CD8-positive, alpha-beta T cell (primary cell): ENCODE measurements at regions of chr16 and their contacts with region 1.

Region 1: GRCh38 chr16:57734925-57735754 is 430 bp upstream of the KATNB1 start:
- DNase-seq: peak; percentile 93 to 100 (median 98)
- ATAC-seq: peak; percentile 88
- H3K4me3 ChIP-seq: peak overlapping the region; percentile 84 to 99
- H3K4me3 Mint-ChIP-seq: peak overlapping the region; percentile 94
- H3K27ac ChIP-seq: peak overlapping the region; percentile 72 to 84
- H3K27ac Mint-ChIP-seq: peak overlapping the region; percentile 97
- H3K4me1 ChIP-seq: peaks cover 21% of the 10 kb centered on the region
- H3K4me1 Mint-ChIP-seq: peaks cover 30% of the 10 kb centered on the region
- H3K27me3 ChIP-seq: no peaks in the 10 kb centered on the region
- H3K27me3 Mint-ChIP-seq: no peaks in the 10 kb centered on the region
- CTCF ChIP-seq: no peak

Region 2: DNA sequence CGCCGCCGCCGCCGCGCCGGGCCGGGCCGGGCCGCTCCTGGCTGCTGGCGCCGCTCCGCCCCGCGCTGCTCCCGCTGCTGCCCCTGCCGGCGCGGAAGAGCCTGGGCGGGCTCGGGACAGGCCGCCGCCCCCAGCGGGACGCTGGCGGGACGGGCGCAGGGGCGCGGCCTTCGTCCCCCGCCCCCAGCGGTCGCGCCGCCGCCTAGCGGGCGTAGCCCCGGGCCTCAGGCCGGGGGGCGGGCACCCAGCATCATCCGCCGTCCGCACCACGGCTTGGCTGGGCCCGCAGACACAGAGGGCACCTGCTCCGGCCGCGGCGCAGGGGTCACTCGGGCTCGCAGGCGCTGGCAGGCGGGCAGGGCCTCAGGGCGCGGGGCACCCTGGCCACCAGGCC is 1309.7 kb before region 1 on chr16 and contains the start of gene AMFR:
- CTCF ChIA-PET with region 1: no interaction called
- POLR2A ChIA-PET with region 1: no interaction called
- intact Hi-C with region 1: loop called in 1 of 2 experiments (anchors 10 kb)
- DNase-seq: peak; percentile 35 to 93 (median 63)
- ATAC-seq: peak; percentile 93
- H3K4me3 ChIP-seq: peak within 1 kb of the TSS; percentile 46 to 62
- H3K4me3 Mint-ChIP-seq: peak within 1 kb of the TSS; percentile 89
- H3K27ac ChIP-seq: peak within 1 kb of the TSS; percentile 17 to 59
- H3K27ac Mint-ChIP-seq: peak within 1 kb of the TSS; percentile 85
- H3K4me1 ChIP-seq: peaks cover 19% of the 10 kb centered on the region
- H3K4me1 Mint-ChIP-seq: peaks cover 39% of the 10 kb centered on the region
- H3K27me3 ChIP-seq: no peaks in the 10 kb centered on the region
- H3K27me3 Mint-ChIP-seq: no peaks in the 10 kb centered on the region
- CTCF ChIP-seq: peak; percentile 45
- total RNA-seq, gene AMFR: 75.4 to 76.4 TPM

Region 3: DNA sequence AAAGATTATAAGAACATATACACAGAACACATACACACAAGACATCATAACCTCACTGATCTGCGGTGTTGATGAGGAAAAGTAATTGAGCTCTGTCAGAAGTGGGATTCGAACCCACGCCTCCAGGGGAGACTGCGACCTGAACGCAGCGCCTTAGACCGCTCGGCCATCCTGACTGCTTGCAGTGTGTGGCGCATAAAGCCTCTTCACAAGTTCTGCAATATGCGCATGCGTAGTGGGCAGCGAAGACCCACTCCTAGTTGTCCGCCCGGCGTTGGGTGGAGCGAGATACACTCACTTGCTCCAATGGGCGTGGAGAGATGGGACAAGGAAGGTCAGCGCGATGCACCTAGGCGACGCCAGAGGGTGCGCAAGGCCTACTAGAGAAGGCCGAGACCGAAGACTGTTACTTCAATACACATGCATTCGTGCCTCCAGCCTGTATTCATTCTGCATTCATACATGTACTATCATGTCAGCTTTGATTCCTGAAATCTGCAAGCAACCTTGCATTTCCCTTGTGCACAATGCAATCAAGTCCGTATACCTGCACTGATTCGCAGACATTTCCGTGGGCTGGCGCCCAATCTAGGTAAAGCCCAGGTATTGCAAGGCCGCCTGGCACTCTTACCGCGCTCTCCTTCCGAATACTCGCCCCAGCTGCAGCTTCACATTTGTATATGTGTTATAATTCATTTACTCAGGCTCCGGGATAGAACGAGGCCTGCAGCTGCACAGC is 434.6 kb before region 1 on chr16:
- CTCF ChIA-PET with region 1: no interaction called
- POLR2A ChIA-PET with region 1: no interaction called
- intact Hi-C with region 1: loop called (anchors 1 to 10 kb)
- DNase-seq: peak; percentile 98 to 100 (median 99)
- ATAC-seq: peak; percentile 91
- H3K4me3 ChIP-seq: peak overlapping the region; percentile 57 to 65
- H3K4me3 Mint-ChIP-seq: no peak overlapping the region
- H3K27ac ChIP-seq: peak overlapping the region; percentile 60 to 81
- H3K27ac Mint-ChIP-seq: no peak overlapping the region
- H3K4me1 ChIP-seq: peaks cover 17% of the 10 kb centered on the region
- H3K4me1 Mint-ChIP-seq: peaks cover 25% of the 10 kb centered on the region
- H3K27me3 ChIP-seq: no peaks in the 10 kb centered on the region
- H3K27me3 Mint-ChIP-seq: no peaks in the 10 kb centered on the region
- CTCF ChIP-seq: peak; percentile 82

Region 4: GRCh38 chr16:57591086-57591869 is 143.9 kb before region 1 on chr16:
- CTCF ChIA-PET with region 1: no interaction called
- POLR2A ChIA-PET with region 1: no interaction called
- intact Hi-C with region 1: loop called (anchors 2 to 5 kb)
- DNase-seq: peak in 7 of 9 experiments; percentile 37 to 82 (median 61)
- ATAC-seq: peak; percentile 27
- H3K4me3 ChIP-seq: no peak overlapping the region
- H3K4me3 Mint-ChIP-seq: peak overlapping the region; percentile 66
- H3K27ac ChIP-seq: peak overlapping the region in 1 of 2 experiments; percentile 62
- H3K27ac Mint-ChIP-seq: peak overlapping the region; percentile 84
- H3K4me1 ChIP-seq: peaks cover 34% of the 10 kb centered on the region
- H3K4me1 Mint-ChIP-seq: peaks cover 47% of the 10 kb centered on the region
- H3K27me3 ChIP-seq: no peaks in the 10 kb centered on the region
- H3K27me3 Mint-ChIP-seq: no peaks in the 10 kb centered on the region
- CTCF ChIP-seq: peak; percentile 60

Region 5: DNA sequence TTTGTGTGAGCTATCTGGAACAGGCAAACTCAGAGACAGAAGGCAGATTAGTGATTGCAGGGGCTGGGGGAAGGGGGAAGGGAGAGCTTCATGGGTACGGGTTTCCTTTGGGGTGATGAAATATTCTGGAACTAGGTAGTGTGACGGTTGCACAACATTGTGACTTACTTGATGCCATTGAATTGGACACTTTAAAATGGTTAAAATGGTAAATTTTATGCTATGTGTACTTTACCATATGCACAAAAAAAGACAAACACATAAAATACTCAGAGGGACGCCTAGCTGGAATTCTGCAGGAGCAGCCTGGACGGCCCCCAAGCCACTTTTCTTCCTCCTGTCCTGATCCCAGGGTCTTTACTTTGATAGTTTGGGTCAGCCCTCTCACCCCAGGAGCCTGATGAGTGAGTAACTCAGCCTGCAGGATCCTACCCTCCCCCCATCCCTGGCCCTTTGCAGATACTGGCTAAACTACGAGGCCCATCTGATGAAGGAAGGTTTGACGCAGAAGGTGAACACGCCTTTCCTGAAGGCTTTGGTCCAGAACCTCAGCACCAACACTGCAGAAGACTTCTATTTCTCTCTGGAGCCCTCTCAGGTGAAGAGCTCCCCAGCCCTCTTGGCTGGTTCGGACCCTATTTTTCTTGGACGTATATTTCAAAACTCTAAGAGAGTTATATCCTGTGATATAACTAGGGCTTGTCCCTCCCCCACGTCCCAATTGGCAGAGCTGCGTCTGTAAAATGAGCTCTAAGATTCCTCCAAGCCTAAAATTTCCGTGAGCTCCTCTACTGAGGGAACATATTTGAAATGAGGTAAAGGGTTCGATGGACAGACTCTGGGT is 59.2 kb before region 1 on chr16:
- CTCF ChIA-PET with region 1: no interaction called
- POLR2A ChIA-PET with region 1: no interaction called
- intact Hi-C with region 1: no loop called
- DNase-seq: no peak
- ATAC-seq: no peak
- H3K4me3 ChIP-seq: no peak overlapping the region
- H3K4me3 Mint-ChIP-seq: no peak overlapping the region
- H3K27ac ChIP-seq: no peak overlapping the region
- H3K27ac Mint-ChIP-seq: no peak overlapping the region
- H3K4me1 ChIP-seq: no peaks in the 10 kb centered on the region
- H3K4me1 Mint-ChIP-seq: peaks cover 3% of the 10 kb centered on the region
- H3K27me3 ChIP-seq: no peaks in the 10 kb centered on the region
- H3K27me3 Mint-ChIP-seq: no peaks in the 10 kb centered on the region
- CTCF ChIP-seq: no peak

Region 6: DNA sequence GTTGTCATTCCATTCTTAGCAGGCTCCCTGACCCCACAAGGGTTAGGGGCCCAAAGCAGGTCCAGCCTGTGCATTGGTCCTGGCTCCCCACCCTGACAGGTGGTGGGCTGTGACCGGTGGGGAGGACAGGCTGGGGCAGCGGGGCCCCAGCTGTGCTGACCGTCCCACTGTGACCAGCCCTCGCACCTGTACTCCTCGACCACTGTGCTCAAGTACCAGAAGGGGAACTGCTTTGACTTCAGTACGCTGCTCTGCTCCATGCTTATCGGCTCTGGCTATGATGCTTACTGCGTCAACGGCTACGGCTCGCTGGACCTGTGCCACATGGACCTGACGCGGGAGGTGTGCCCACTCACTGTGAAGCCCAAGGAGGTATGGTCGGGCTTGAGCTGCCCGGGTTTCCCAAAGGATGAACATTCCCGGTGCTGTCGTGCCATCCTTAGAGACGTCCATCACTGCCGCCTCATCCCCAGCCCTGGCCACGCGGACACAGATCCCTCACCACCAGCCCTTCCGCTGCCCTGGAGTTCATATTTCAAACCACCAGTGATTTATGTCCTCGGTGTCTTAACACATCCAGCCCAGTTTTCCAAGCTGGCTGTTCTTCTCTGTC is 33.3 kb before region 1 on chr16:
- CTCF ChIA-PET with region 1: no interaction called
- POLR2A ChIA-PET with region 1: no interaction called
- intact Hi-C with region 1: no loop called
- DNase-seq: no peak
- ATAC-seq: no peak
- H3K4me3 ChIP-seq: no peak overlapping the region
- H3K4me3 Mint-ChIP-seq: no peak overlapping the region
- H3K27ac ChIP-seq: no peak overlapping the region
- H3K27ac Mint-ChIP-seq: no peak overlapping the region
- H3K4me1 ChIP-seq: no peaks in the 10 kb centered on the region
- H3K4me1 Mint-ChIP-seq: no peaks in the 10 kb centered on the region
- H3K27me3 ChIP-seq: no peaks in the 10 kb centered on the region
- H3K27me3 Mint-ChIP-seq: no peaks in the 10 kb centered on the region
- CTCF ChIP-seq: no peak

Region 7: GRCh38 chr16:57757326-57757786 is 22.2 kb after region 1 on chr16:
- CTCF ChIA-PET with region 1: interaction called, 14 read pairs
- POLR2A ChIA-PET with region 1: interaction called, 7 read pairs
- intact Hi-C with region 1: loop called in 1 of 2 experiments (anchors 1 kb)
- DNase-seq: peak; percentile 79 to 93 (median 87)
- ATAC-seq: peak; percentile 97
- H3K4me3 ChIP-seq: no peak overlapping the region
- H3K4me3 Mint-ChIP-seq: no peak overlapping the region
- H3K27ac ChIP-seq: peak overlapping the region in 1 of 2 experiments; percentile 14
- H3K27ac Mint-ChIP-seq: no peak overlapping the region
- H3K4me1 ChIP-seq: no peaks in the 10 kb centered on the region
- H3K4me1 Mint-ChIP-seq: no peaks in the 10 kb centered on the region
- H3K27me3 ChIP-seq: no peaks in the 10 kb centered on the region
- H3K27me3 Mint-ChIP-seq: no peaks in the 10 kb centered on the region
- CTCF ChIP-seq: peak; percentile 80

Region 8: DNA sequence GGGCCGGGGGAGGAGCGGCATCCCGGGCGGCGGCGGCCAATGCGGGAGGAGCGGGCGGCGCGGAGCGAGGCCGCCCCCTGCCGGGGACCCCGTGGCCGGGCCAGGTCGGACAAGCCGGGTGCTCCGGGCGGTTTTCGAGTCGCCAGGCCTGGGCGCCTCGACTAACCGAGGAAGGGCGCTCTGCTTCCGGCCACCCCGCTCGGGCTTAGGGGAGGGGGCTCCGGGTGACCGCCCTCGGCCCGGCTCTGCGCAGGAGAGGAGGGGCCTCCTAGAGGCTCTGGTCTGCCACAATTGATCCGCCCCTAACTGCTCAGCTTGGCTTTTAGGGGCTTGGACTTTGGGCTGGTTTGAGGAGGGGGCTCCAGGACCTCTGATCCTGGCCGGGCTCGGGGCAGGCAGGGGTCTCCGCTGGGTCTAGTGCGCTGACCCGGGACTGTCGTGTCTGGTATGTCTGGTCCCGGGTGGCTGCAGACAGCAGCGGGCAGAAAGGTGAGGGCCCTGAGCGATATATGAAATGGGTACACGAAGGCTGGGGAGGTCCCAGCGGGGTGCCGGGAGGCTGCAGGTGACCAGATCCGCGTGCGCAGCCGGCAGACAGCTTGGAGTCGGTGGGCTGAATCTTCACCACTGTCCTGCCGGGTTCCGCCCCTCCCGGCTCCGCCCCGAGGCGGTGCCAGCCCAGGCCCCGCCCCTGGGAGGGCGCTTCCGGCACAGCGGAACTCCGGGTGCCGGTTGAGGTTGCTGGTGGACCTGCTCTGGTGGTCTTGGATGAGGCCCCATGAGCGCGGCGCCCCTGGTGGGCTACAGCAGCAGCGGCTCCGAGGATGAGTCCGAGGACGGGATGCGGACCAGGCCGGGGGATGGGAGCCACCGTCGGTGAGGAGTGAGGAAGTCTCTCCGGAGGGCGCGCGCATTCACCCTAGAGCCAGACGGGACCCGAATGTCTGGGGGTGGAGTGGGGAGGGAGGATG is 265.9 kb after region 1 on chr16 and contains the start of gene USB1:
- CTCF ChIA-PET with region 1: no interaction called
- POLR2A ChIA-PET with region 1: interaction called, 5 read pairs
- intact Hi-C with region 1: loop called (anchors 1 to 2 kb)
- DNase-seq: peak; percentile 68 to 92 (median 84)
- ATAC-seq: peak; percentile 77
- H3K4me3 ChIP-seq: peak within 1 kb of the TSS; percentile 69 to 82
- H3K4me3 Mint-ChIP-seq: peak within 1 kb of the TSS; percentile 91
- H3K27ac ChIP-seq: peak within 1 kb of the TSS; percentile 61 to 71
- H3K27ac Mint-ChIP-seq: peak within 1 kb of the TSS; percentile 87
- H3K4me1 ChIP-seq: peaks cover 43% of the 10 kb centered on the region
- H3K4me1 Mint-ChIP-seq: peaks cover 64% of the 10 kb centered on the region
- H3K27me3 ChIP-seq: no peaks in the 10 kb centered on the region
- H3K27me3 Mint-ChIP-seq: no peaks in the 10 kb centered on the region
- CTCF ChIP-seq: peak; percentile 77
- total RNA-seq, gene USB1: 24.7 to 27.9 TPM

Region 9: GRCh38 chr16:58392215-58393137 is 657.3 kb after region 1 on chr16 and contains the start of gene GINS3:
- CTCF ChIA-PET with region 1: no interaction called
- POLR2A ChIA-PET with region 1: no interaction called
- intact Hi-C with region 1: loop called (anchors 1 to 5 kb)
- DNase-seq: peak; percentile 62 to 90 (median 83)
- ATAC-seq: peak; percentile 97
- H3K4me3 ChIP-seq: peak within 1 kb of the TSS; percentile 96 to 98
- H3K4me3 Mint-ChIP-seq: peak within 1 kb of the TSS; percentile 100
- H3K27ac ChIP-seq: peak within 1 kb of the TSS; percentile 69 to 79
- H3K27ac Mint-ChIP-seq: peak within 1 kb of the TSS; percentile 97
- H3K4me1 ChIP-seq: peaks cover 6% of the 10 kb centered on the region
- H3K4me1 Mint-ChIP-seq: peaks cover 16% of the 10 kb centered on the region
- H3K27me3 ChIP-seq: no peaks in the 10 kb centered on the region
- H3K27me3 Mint-ChIP-seq: no peaks in the 10 kb centered on the region
- CTCF ChIP-seq: no peak
- total RNA-seq, gene GINS3: 0.54 to 1.1 TPM